PC-3 (cell line): ENCODE measurements at regions of chr17 and their contacts with region 1.

Region 1: DNA sequence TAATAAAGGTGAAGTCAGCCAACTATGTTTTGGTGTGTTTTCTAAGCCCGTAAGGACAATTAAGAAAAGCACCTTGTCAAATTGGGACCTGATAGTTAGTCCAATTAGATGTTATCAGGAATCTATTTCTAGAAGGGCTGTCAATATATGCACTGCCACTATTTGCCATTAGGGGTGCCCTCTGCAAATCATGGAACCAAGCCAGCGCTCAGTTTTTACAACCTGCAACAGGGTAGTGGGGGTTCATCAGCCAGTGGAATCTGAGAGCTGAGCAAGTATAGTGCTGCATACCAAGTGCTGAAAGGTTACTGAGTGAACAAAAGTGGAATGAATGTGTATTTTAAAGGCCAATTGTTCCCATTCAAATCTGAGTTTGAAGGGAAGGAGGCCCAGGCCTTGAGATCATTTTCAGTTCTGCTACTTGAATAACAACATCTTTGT is 10.4 kb downstream of the PRR11 start:
- DNase-seq: peak; percentile 77
- ATAC-seq: peak; percentile 80
- H3K4me3 ChIP-seq: no peak overlapping the region
- H3K27ac ChIP-seq: no peak overlapping the region
- H3K4me1 ChIP-seq: peaks cover 15% of the 10 kb centered on the region
- H3K27me3 ChIP-seq: no peaks in the 10 kb centered on the region
- CTCF ChIP-seq: peak; percentile 87

Region 2: GRCh38 chr17:59018019-59018418 is 147.9 kb before region 1 on chr17:
- CTCF ChIA-PET with region 1: no interaction called
- POLR2A ChIA-PET with region 1: no interaction called
- intact Hi-C with region 1: no loop called
- DNase-seq: no peak
- ATAC-seq: no peak
- H3K4me3 ChIP-seq: no peak overlapping the region
- H3K27ac ChIP-seq: no peak overlapping the region
- H3K4me1 ChIP-seq: no peaks in the 10 kb centered on the region
- H3K27me3 ChIP-seq: no peaks in the 10 kb centered on the region
- CTCF ChIP-seq: no peak

Region 3: DNA sequence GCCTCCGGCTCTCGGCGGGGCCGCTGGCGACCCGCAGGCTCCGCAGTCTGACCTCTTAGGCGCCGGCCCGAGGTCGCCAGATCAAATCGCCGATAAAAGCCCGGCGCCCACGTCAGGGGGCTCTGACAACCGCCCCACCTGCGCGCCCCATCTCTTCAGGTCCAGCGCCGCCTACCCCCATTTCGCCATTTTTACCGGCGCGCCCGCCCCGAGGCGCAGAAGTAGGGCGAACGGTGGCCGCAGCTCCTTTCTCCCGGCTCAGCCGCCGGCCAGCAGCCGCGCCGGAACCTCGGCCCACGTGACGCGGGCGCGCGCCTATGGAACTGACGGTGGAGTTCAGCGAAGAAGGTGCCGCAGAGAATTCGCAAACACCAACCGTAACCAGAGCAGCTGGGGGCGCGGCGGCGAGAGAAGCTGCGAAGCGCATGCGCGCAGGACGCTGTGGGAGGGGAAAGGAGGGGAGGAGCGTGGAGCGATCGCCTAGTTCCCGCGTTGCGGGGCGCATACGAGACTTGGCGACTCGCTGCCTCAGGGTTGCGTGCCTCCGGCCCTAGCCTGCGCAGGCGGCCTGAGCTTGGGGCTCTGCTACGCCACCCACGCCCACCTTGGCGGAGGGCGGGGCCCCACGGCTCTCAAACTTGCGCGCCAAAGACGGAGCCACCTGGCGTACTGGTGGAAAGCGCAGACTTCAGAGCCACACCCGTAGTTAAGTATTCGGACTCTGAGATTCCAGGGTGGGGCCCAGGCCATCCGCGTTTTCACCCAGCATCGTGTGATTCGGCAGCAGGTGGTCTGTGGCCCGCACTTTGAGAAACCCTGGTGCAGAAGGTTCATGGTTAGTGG is 59.2 kb before region 1 on chr17 and contains the start of gene TRIM37:
- CTCF ChIA-PET with region 1: no interaction called
- POLR2A ChIA-PET with region 1: no interaction called
- intact Hi-C with region 1: no loop called
- DNase-seq: peak; percentile 100
- ATAC-seq: peak; percentile 96
- H3K4me3 ChIP-seq: peak within 1 kb of the TSS; percentile 87
- H3K27ac ChIP-seq: peak within 1 kb of the TSS; percentile 84
- H3K4me1 ChIP-seq: peaks cover 24% of the 10 kb centered on the region
- H3K27me3 ChIP-seq: no peaks in the 10 kb centered on the region
- CTCF ChIP-seq: peak; percentile 31
- total RNA-seq, gene TRIM37: 35.1 and 42.0 TPM in 2 replicates

Region 4: GRCh38 chr17:59202320-59202719 is 36.4 kb after region 1 on chr17:
- CTCF ChIA-PET with region 1: no interaction called
- POLR2A ChIA-PET with region 1: interaction called, 22 read pairs
- intact Hi-C with region 1: no loop called
- DNase-seq: no peak
- ATAC-seq: no peak
- H3K4me3 ChIP-seq: no peak overlapping the region
- H3K27ac ChIP-seq: no peak overlapping the region
- H3K4me1 ChIP-seq: no peaks in the 10 kb centered on the region
- H3K27me3 ChIP-seq: no peaks in the 10 kb centered on the region
- CTCF ChIP-seq: no peak

Region 5: DNA sequence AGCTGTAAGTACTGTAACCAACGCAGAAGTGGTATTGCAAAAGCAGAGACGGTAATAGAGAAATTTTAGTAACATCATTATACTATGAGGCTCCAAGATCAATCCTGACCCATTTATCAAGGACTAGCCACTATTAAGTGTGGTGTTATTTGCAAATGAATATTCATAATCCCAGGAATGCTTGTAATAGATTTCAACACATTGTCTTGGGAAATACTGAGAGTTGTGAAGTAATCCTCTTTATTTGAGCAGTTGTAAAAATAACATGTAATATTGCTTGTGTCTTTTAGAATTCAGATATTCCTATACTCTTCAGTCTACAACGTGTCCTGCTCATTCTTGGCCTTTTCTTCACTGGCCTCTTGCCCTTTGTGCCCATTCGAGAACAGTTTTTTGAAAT is 100.8 kb after region 1 on chr17:
- CTCF ChIA-PET with region 1: no interaction called
- POLR2A ChIA-PET with region 1: no interaction called
- intact Hi-C with region 1: no loop called
- DNase-seq: no peak
- ATAC-seq: no peak
- H3K4me3 ChIP-seq: no peak overlapping the region
- H3K27ac ChIP-seq: no peak overlapping the region
- H3K4me1 ChIP-seq: no peaks in the 10 kb centered on the region
- H3K27me3 ChIP-seq: no peaks in the 10 kb centered on the region
- CTCF ChIP-seq: no peak